ENCODE measurements at regions of chr5 and their contacts with region 1.

Region 1: DNA sequence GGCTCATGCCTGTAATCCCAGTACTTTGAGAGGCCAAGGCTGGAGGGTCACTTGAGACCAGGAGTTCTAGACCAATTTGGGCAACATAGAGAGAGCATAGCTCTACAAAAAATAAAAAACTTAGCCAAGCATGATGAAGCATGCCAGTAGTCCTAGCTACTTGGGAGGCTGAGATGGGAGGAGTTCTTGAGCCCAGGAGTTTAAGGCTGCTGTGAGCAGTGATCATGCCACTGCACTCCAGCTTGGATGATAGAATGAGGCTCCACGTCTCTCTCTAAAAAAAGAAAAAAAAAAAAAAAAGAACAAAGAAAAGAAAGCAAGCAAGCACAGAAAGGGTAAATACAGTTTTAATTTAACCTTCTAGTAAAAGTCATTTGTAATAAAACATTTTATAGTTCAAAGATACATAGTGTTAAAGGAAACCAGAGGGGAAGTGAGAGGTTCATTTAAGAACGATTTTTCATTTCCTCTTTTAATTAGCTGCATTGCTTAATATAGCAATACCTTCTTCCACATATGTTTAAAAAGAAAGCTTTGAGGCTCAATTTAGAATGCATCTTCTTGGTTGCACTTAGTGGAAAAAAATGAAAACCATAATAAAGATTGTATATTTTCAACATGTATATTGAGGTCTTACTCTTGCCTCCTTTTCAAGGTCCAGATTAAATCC is 14.9 kb downstream of the GAPT start:
- DNase-seq: no peak
- ATAC-seq: peak; percentile 87
- H3K4me3 Mint-ChIP-seq: peak overlapping the region; percentile 62
- H3K27ac Mint-ChIP-seq: peak overlapping the region; percentile 78
- H3K4me1 Mint-ChIP-seq: peaks cover 80% of the 10 kb centered on the region
- H3K27me3 Mint-ChIP-seq: no peaks in the 10 kb centered on the region
- CTCF ChIP-seq: no peak

Region 2: GRCh38 chr5:58080558-58080957 is 425.5 kb before region 1 on chr5:
- CTCF ChIA-PET with region 1: no interaction called
- POLR2A ChIA-PET with region 1: no interaction called
- intact Hi-C with region 1: no loop called
- DNase-seq: no peak
- ATAC-seq: no peak
- H3K4me3 Mint-ChIP-seq: no peak overlapping the region
- H3K27ac Mint-ChIP-seq: no peak overlapping the region
- H3K4me1 Mint-ChIP-seq: no peaks in the 10 kb centered on the region
- H3K27me3 Mint-ChIP-seq: no peaks in the 10 kb centered on the region
- CTCF ChIP-seq: no peak

Region 3: DNA sequence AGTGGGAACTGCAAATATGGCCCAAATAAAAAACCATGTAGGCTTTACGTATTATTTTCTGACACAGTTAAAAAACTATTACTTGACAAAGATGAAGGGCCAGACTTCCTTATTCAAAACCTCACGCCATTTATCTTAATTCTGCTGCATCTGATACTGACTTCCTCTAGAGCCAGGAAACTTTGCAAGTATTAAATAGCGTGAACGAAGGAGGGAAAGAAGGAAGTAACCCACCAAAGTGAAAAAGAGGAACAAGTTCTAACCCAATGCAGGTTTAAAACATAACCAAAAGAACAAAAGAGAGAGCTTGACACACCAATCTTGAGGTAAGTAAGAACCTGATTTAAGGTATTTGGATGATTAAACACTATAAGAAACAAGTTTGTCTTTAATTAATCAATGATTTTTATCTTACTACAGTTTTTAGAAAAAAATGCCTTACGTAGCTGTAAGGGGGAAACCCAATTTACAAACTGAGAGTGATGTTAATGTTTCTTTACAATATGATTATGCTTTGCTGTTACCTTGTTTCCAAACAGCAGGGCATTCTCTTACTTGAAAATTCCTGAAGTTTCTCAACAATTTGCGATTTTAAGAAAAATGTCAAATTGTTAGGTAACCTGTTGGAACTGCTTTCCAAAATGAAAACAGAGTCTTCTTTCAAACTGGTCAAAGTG is 14.8 kb before region 1 on chr5 and contains the start of gene GAPT:
- CTCF ChIA-PET with region 1: interaction called, 4 read pairs
- POLR2A ChIA-PET with region 1: interaction called, 11 read pairs
- intact Hi-C with region 1: loop called (anchors 1 kb)
- DNase-seq: no peak
- ATAC-seq: peak; percentile 87
- H3K4me3 Mint-ChIP-seq: peak within 1 kb of the TSS; percentile 82
- H3K27ac Mint-ChIP-seq: peak within 1 kb of the TSS; percentile 95
- H3K4me1 Mint-ChIP-seq: peaks cover 66% of the 10 kb centered on the region
- H3K27me3 Mint-ChIP-seq: no peaks in the 10 kb centered on the region
- CTCF ChIP-seq: no peak
- total RNA-seq, gene GAPT: 39.8 and 40.3 TPM in 2 replicates

Region 4: DNA sequence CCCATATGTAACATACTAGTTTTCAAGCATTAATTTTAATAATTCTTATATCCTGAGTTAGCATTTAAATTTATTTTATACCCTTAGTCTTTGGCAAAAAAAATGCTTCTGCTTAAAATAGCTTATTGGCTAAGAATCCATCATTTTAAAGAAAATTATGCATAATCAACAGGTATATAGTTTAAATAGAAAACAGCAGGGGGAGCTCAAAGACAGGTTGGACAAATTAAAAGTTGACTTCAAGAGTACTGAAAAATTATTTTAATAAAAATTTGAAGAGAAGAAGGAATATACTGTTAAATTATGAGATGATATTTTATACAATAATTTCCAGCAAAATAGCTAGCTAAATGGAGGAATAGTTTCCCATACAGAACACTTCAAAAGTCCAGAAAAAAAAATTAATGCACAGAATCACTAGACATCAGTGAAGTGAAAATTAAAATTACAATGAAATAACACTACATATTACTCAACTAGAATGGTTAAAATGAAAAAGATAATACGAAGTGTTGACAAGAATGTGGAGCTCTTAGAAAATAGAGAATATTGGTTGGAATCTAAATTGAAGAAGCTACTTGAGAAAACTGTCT is 1000.3 kb after region 1 on chr5:
- CTCF ChIA-PET with region 1: no interaction called
- POLR2A ChIA-PET with region 1: no interaction called
- intact Hi-C with region 1: no loop called
- DNase-seq: no peak
- ATAC-seq: no peak
- H3K4me3 Mint-ChIP-seq: no peak overlapping the region
- H3K27ac Mint-ChIP-seq: no peak overlapping the region
- H3K4me1 Mint-ChIP-seq: no peaks in the 10 kb centered on the region
- H3K27me3 Mint-ChIP-seq: no peaks in the 10 kb centered on the region
- CTCF ChIP-seq: no peak

Measured in activated B cell treated with CpG ODN at 0.5 μM for 24 hours (primary cell).